ENCODE measurements at regions of chr6 and their contacts with region 1.

Region 1: DNA sequence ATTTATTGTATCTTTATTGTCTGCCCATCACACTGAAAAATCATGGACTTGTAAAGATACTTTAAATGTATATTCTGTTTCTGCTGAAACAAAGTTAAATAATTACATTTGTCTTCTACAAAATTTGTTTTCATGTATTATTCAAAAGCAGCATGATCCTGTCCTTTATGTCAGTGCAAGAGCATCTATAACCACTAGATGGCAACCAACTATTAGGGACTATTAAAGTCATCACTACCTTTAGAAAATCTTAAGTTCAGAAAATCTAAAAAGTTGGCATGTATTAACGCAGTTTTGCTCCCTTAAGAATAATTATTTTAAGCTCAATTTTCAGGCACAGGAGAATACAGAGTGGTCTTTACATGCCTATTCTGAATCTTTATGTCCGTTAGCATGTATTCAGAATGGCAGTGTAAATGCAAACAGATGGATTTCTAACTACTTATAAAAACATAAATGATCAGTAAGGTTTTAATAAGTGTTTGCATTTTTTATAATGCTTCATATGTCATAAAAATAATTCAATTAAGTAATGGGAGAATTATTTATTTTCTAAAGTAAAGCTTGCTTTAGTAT is 17.8 kb downstream of the TMEM30A start:
- DNase-seq: no peak
- ATAC-seq: peak; percentile 69
- H3K4me3 ChIP-seq: no peak overlapping the region
- H3K4me1 ChIP-seq: peaks cover 17% of the 10 kb centered on the region
- CTCF ChIP-seq: peak; percentile 51

Region 2: GRCh38 chr6:74939151-74939708 is 327.6 kb before region 1 on chr6:
- intact Hi-C with region 1: no loop called
- DNase-seq: no peak
- ATAC-seq: no peak
- H3K4me3 ChIP-seq: no peak overlapping the region
- H3K4me1 ChIP-seq: no peaks in the 10 kb centered on the region
- CTCF ChIP-seq: no peak

Region 3: DNA sequence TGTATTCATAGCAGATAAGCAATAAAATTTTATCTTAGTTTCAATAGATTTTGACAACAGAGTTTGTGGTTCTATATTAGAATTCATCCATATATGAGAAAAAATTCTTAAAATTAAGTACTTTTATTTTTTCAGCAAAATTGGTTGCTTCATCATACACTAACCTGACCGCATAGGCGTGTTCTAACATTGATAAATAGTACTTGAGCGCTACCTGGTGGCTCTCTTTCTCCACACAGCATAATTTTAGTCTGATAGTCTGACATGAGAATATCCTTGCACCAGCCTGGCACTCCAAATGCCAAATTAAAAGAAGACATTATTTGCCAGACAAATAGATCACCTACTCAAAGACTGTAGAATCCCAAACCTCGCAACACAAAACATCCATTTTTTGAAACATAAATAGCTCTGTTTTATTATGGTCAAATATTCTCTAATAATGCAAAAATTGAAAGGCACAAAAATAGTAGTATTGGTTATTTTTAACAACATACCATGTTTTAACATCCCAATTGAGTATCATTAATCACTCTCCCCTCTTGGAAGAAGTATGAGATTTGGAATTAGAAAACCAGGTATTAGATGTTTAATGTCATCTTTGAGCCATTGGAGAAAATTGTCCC is 259.8 kb after region 1 on chr6:
- intact Hi-C with region 1: loop called in 1 of 2 experiments (anchors 10 kb)
- DNase-seq: peak in 1 of 3 donors; percentile 90
- ATAC-seq: peak; percentile 86
- H3K4me3 ChIP-seq: no peak overlapping the region
- H3K4me1 ChIP-seq: peaks cover 18% of the 10 kb centered on the region
- CTCF ChIP-seq: no peak